H1 (cell line): ENCODE measurements at regions of chr12 and their contacts with region 1.

Region 1: DNA sequence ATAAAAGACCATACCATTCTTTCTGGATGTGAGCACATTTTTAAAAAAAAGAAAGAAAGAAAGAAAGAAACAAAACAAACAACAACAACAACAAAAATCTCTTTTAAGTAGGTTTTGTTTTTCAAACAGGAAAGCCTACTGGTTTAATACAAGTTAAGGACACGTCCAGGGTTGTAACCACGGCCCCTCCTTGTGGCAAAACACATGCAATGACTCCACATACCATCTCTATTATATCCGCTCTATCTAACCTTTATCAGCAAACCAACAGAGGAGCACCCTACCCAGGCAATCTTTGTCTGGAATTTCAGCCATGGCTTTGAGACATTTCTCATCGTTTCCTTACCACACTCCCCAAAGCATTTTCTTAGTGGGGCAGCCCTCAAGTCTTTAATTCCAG is 360.5 kb upstream of the TMPO start:
- DNase-seq: peak in 1 of 2 experiments; percentile 25
- H3K4me3 ChIP-seq: no peak overlapping the region
- H3K27ac ChIP-seq: no peak overlapping the region
- H3K4me1 ChIP-seq: no peaks in the 10 kb centered on the region; a peak in 1 of 7 replicates
- H3K27me3 ChIP-seq: no peaks in the 10 kb centered on the region
- CTCF ChIP-seq: peak; percentile 7 to 74 (median 68)
- EP300 ChIP-seq: no peak
- POLR2A ChIP-seq: no peak
- RAD21 ChIP-seq: peak; percentile 85 to 87

Region 2: DNA sequence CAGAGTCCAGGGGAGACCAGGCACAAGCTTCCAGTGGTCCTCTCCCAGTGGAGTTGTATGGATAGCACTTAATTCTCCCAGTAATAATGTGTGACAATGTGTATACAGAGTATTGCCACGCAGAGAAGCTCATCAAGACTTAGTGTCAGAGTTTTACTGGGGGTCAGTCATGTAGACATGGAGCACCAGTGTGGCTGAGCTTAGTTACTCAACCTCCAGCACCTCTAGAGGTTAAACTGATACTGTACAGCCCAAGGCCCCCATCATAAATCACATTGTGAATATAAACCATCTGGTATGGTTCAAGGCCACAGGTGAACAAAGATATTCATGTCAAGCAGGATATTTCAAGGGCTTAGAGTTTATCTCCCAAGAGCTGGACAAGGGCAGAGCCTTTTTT is 17.6 kb before region 1 on chr12:
- CTCF ChIA-PET with region 1: interaction called, 21 read pairs
- POLR2A ChIA-PET with region 1: no interaction called
- DNase-seq: no peak
- H3K4me3 ChIP-seq: no peak overlapping the region
- H3K27ac ChIP-seq: no peak overlapping the region
- H3K4me1 ChIP-seq: no peaks in the 10 kb centered on the region; a peak in 1 of 7 replicates
- H3K27me3 ChIP-seq: peaks cover 0 to 2% (median 0%) of the 10 kb centered on the region in 4 experiments; a peak in 1 of 7 replicates
- CTCF ChIP-seq: no peak
- EP300 ChIP-seq: no peak
- POLR2A ChIP-seq: no peak
- RAD21 ChIP-seq: 0 out of 4 replicates have a peak, but pooled peaks of 1 of the 2 experiments have one; percentile 8

Region 3: GRCh38 chr12:98373025-98373554 is 218.2 kb after region 1 on chr12:
- CTCF ChIA-PET with region 1: interaction called, 13 read pairs
- POLR2A ChIA-PET with region 1: no interaction called
- DNase-seq: no peak
- H3K4me3 ChIP-seq: no peak overlapping the region
- H3K27ac ChIP-seq: no peak overlapping the region
- H3K4me1 ChIP-seq: no peaks in the 10 kb centered on the region; a peak in 1 of 7 replicates
- H3K27me3 ChIP-seq: no peaks in the 10 kb centered on the region
- CTCF ChIP-seq: peak in 2 of 3 experiments; percentile 65 to 71; a peak in 3 of 4 replicates
- EP300 ChIP-seq: no peak
- POLR2A ChIP-seq: no peak
- RAD21 ChIP-seq: peak; percentile 89 to 92